ENCODE measurements at regions of chr3 and their contacts with region 1.

Region 1: DNA sequence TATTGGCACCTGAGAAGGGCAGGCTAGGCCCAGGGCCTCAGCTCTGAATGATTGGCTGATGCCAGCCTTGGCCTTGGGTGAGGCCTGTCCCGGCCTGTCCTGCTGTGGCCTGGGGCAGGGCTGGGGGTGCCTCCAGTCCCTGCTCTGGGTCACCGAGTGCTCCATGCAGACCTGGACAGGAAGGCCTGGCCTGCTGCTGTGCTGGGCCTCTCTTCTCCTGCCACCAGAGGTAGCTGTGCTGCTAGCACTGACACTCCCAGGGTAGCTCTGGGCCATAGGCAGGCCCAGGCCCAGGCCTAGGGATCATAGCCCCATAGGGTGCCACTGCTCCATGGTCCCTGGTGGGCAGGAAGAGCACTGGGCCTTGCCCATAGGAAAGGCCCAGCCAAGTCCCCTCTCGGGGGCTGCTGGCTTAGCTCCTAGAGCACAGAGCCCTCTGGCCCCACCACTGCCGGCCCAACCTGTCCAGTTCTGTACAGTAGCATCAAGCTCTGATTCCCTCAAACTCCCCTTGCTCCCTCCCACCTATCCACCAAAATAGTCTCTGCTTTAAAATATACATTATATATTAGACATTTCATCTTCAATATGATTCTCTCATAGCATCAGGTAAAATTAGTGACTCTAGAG is 18.2 kb downstream of the ABTB1 start:
- DNase-seq: peak; percentile 66
- ATAC-seq: peak; percentile 86
- H3K4me3 ChIP-seq: no peak overlapping the region
- H3K27ac ChIP-seq: peak overlapping the region; percentile 67
- H3K4me1 ChIP-seq: peaks cover 16% of the 10 kb centered on the region
- H3K27me3 ChIP-seq: no peaks in the 10 kb centered on the region
- CTCF ChIP-seq: peak; percentile 64

Region 2: GRCh38 chr3:127628788-127629466 is 62.0 kb before region 1 on chr3 and contains the start of gene PODXL2:
- CTCF ChIA-PET with region 1: no interaction called
- POLR2A ChIA-PET with region 1: no interaction called
- intact Hi-C with region 1: no loop called
- DNase-seq: peak; percentile 38
- ATAC-seq: peak; percentile 69
- H3K4me3 ChIP-seq: peak within 1 kb of the TSS; percentile 63
- H3K27ac ChIP-seq: no peak within 1 kb of the TSS
- H3K4me1 ChIP-seq: no peaks in the 10 kb centered on the region; the same call in 1 of the 2 replicates
- H3K27me3 ChIP-seq: no peaks in the 10 kb centered on the region
- CTCF ChIP-seq: no peak
- total RNA-seq, gene PODXL2: 32.4 and 45.8 TPM in 2 replicates

Region 3: GRCh38 chr3:127652231-127652995 is 38.5 kb before region 1 on chr3:
- CTCF ChIA-PET with region 1: no interaction called
- POLR2A ChIA-PET with region 1: interaction called, 3 read pairs
- intact Hi-C with region 1: loop called (anchors 2 kb)
- DNase-seq: peak; percentile 64
- ATAC-seq: peak; percentile 71
- H3K4me3 ChIP-seq: no peak overlapping the region
- H3K27ac ChIP-seq: no peak overlapping the region
- H3K4me1 ChIP-seq: peaks cover 25% of the 10 kb centered on the region
- H3K27me3 ChIP-seq: no peaks in the 10 kb centered on the region
- CTCF ChIP-seq: peak; percentile 85

Region 4: GRCh38 chr3:127865941-127866340 is 175.0 kb after region 1 on chr3:
- CTCF ChIA-PET with region 1: no interaction called
- POLR2A ChIA-PET with region 1: no interaction called
- intact Hi-C with region 1: loop called (anchors 5 kb)
- DNase-seq: peak; percentile 56
- ATAC-seq: peak; percentile 69
- H3K4me3 ChIP-seq: no peak overlapping the region
- H3K27ac ChIP-seq: no peak overlapping the region
- H3K4me1 ChIP-seq: peaks cover 20% of the 10 kb centered on the region
- H3K27me3 ChIP-seq: no peaks in the 10 kb centered on the region
- CTCF ChIP-seq: 0 out of 2 replicates have a peak, but pooled peaks have one; percentile 18

Region 5: GRCh38 chr3:127970966-127971592 is 280.1 kb after region 1 on chr3:
- CTCF ChIA-PET with region 1: no interaction called
- POLR2A ChIA-PET with region 1: interaction called, 3 read pairs
- intact Hi-C with region 1: loop called (anchors 1 kb)
- DNase-seq: peak; percentile 66
- ATAC-seq: peak; percentile 90
- H3K4me3 ChIP-seq: no peak overlapping the region
- H3K27ac ChIP-seq: no peak overlapping the region
- H3K4me1 ChIP-seq: no peaks in the 10 kb centered on the region
- H3K27me3 ChIP-seq: no peaks in the 10 kb centered on the region
- CTCF ChIP-seq: peak; percentile 76